Activated T-helper 1 cell treated with anti-CD3 and anti-CD28 coated beads, Interleukin-12 subunit alpha, Interleukin-12 subunit beta, Interleukin-2, Interleukin-4 antibody, amounts not matched to agents 30 ng/mL and 10 ng/mL and 1 ng/mL, durations not matched to agents 14 hours and 24 hours and 36 hours (primary cell): ENCODE measurements at regions of chr1 and their contacts with region 1.

Region 1: GRCh38 chr1:221741711-221742554 is at the start of gene DUSP10:
- DNase-seq: peak; percentile 99
- H3K4me3 Mint-ChIP-seq: no peak within 1 kb of the TSS
- H3K27ac Mint-ChIP-seq: peak within 1 kb of the TSS; percentile 77
- H3K4me1 Mint-ChIP-seq: peaks cover 9% of the 10 kb centered on the region
- H3K27me3 Mint-ChIP-seq: no peaks in the 10 kb centered on the region
- total RNA-seq, gene DUSP10: 19.2 and 19.4 TPM in 2 replicates

Region 2: GRCh38 chr1:220879076-220879508 is 862.8 kb before region 1 on chr1 and contains the start of gene HLX:
- intact Hi-C with region 1: loop called (anchors 5 kb)
- DNase-seq: peak; percentile 24
- H3K4me3 Mint-ChIP-seq: peak within 1 kb of the TSS; percentile 84
- H3K27ac Mint-ChIP-seq: peak within 1 kb of the TSS; percentile 84
- H3K4me1 Mint-ChIP-seq: peaks cover 36% of the 10 kb centered on the region
- H3K27me3 Mint-ChIP-seq: peaks cover 70% of the 10 kb centered on the region
- total RNA-seq, gene HLX: 5.1 and 6.3 TPM in 2 replicates

Region 3: DNA sequence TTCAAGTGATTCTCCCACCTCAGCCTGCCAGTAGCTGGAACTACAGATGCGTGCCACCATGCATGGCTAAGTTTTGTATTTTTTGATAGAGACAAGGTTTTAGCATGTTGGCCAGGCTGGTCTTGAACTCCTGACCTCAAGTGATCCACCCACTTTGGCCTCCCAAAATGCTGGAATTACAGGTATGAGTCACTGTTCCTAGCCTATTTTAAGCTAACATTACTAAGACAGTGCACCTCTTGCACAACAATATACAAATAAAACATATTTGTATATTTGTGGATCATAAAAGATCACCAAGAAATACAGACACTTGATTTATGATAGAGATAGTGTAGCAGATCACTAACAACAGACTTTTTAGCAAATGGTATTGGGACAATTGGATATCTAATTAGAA is 139.1 kb before region 1 on chr1:
- intact Hi-C with region 1: no loop called
- DNase-seq: no peak
- H3K4me3 Mint-ChIP-seq: no peak overlapping the region
- H3K27ac Mint-ChIP-seq: no peak overlapping the region
- H3K4me1 Mint-ChIP-seq: no peaks in the 10 kb centered on the region
- H3K27me3 Mint-ChIP-seq: peaks cover 7% of the 10 kb centered on the region

Region 4: DNA sequence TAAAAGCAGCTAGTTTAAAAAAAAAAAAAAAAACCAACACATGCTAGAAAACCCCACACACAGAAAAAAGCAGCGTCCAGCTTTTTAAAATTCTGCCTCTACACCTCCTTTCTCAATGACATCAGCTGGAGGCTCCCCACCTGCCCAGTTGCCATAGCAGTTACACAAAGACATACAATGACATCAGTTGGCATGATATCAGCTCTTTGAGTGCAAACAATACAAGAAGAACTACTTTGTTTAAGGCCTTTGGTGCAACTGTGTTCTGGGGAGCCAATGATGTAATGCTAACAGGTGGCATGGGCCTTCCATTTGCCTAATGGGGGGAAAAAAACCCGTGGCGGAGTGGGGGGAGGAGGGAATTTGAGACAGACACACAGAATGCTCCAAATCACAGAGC is 32.9 kb before region 1 on chr1:
- intact Hi-C with region 1: loop called (anchors 1 kb)
- DNase-seq: peak; percentile 50
- H3K4me3 Mint-ChIP-seq: no peak overlapping the region
- H3K27ac Mint-ChIP-seq: peak overlapping the region; percentile 92
- H3K4me1 Mint-ChIP-seq: peaks cover 78% of the 10 kb centered on the region
- H3K27me3 Mint-ChIP-seq: no peaks in the 10 kb centered on the region

Region 5: GRCh38 chr1:221794079-221794670 is 52.2 kb after region 1 on chr1:
- intact Hi-C with region 1: loop called (anchors 1 kb)
- DNase-seq: peak; percentile 32
- H3K4me3 Mint-ChIP-seq: peak overlapping the region; percentile 35
- H3K27ac Mint-ChIP-seq: peak overlapping the region; percentile 91
- H3K4me1 Mint-ChIP-seq: peaks cover 41% of the 10 kb centered on the region
- H3K27me3 Mint-ChIP-seq: no peaks in the 10 kb centered on the region

Region 6: DNA sequence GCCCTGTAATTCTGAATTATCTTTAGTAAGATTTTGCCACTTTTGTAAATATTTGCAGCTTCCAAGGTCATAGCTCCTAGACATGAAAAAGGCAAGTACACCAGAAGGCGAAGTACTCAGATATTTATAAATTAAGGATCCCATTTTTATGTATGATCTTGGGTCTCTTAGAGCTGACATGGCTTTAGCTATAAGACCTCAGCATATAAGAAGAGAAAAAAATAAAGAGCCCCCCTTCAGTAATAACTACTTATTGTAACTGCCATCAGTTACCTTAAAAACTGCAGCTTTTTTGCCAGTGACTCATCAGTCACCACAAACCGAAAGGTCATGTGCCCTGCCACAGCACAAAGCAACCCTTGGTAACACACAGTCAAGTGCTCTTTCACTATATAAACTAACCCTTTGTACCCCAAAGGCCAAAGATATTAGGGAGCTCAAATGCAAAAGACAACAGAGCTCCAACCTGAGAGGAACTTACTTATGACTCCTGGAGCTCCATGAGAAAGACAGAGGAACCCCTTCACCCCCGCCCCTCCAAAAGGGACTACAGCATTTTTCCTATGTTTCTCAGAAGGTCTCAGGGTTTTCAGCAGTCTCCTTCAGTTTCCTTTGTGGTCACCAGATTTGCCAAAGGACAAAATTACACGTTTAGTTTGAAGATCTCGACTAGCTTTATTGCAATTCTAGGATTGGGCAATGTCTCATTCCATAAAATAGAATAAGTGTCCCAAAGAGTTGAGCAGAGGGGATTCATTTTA is 219.8 kb after region 1 on chr1:
- intact Hi-C with region 1: loop called (anchors 1 kb)
- DNase-seq: peak; percentile 38
- H3K4me3 Mint-ChIP-seq: peak overlapping the region; percentile 23
- H3K27ac Mint-ChIP-seq: no peak overlapping the region
- H3K4me1 Mint-ChIP-seq: peaks cover 16% of the 10 kb centered on the region
- H3K27me3 Mint-ChIP-seq: peaks cover 4% of the 10 kb centered on the region

Region 7: GRCh38 chr1:222455188-222455879 is 713.4 kb after region 1 on chr1:
- intact Hi-C with region 1: loop called (anchors 1 kb)
- DNase-seq: peak; percentile 69
- H3K4me3 Mint-ChIP-seq: no peak overlapping the region
- H3K27ac Mint-ChIP-seq: no peak overlapping the region
- H3K4me1 Mint-ChIP-seq: peaks cover 12% of the 10 kb centered on the region
- H3K27me3 Mint-ChIP-seq: peaks cover 3% of the 10 kb centered on the region